Cardiac septum (tissue), 1 donor: ENCODE measurements at regions of chr2 and their contacts with region 1.

Region 1: DNA sequence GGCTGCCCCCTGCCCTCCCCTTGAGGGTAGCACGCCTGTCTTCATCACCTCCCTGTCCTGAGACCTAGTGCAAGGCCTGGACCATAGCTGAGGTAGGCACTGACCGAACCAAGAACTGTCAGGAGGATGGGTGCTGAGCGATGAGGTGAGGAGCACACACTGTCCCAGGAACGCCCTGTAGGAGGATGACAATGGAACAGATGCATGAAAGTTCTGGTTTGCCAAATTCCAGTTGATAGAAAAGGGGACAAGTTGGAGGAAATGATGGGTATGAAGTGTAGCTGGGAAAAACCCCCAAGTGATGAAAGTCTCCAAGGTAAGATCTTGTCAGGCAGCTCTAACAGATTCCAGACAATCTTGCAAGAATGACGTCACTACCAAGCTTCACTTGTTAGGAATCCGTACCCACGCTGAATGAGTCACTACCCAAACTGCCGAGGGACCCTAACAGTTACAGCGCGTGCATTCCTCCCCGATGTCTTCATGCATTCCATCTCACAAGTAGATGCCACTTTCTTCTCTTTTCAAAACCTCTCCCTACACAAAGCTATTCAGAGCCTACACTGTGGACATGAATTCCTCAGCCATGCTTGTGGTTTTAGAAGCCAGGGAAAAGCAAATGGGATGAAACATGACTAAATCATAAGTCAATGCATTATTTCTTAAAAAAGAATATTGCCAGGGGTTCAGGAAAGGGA is 27.6 kb downstream of the MRPL33 start:
- DNase-seq: no peak

Region 2: GRCh38 chr2:27715318-27716210 is 83.5 kb before region 1 on chr2:
- intact Hi-C with region 1: loop called (anchors 5 kb)
- DNase-seq: peak; percentile 89

Region 3: DNA sequence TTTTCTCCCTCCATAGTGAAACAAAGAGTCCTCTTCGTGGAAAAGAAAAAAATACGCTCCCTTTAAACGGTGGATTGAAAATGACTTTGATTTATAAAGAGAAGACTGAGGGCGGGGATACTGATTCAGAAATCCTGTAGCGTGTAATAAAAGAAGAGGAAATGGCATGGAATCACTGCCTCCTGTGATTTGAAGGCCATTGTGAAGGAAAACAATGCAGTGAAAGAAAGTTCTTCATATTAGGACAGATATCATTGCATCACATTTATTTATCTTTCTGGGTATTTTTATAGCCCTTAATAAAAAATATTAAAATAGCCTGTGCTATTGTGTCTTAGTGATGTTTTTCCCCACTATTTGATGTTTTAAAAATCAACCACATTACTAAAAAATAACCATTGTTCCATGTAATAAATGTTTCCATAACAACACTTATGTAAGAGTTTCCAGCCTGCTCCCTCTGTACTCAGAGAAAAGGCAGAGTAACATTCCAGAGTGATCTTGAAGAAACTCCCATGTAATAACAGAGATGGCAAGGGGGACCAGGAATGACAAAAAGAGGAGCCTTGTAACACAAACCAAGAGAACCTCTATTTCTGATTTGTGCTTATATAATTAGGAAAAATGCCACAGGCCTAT is 19.6 kb before region 1 on chr2:
- intact Hi-C with region 1: loop called (anchors 1 kb)
- DNase-seq: no peak

Region 4: DNA sequence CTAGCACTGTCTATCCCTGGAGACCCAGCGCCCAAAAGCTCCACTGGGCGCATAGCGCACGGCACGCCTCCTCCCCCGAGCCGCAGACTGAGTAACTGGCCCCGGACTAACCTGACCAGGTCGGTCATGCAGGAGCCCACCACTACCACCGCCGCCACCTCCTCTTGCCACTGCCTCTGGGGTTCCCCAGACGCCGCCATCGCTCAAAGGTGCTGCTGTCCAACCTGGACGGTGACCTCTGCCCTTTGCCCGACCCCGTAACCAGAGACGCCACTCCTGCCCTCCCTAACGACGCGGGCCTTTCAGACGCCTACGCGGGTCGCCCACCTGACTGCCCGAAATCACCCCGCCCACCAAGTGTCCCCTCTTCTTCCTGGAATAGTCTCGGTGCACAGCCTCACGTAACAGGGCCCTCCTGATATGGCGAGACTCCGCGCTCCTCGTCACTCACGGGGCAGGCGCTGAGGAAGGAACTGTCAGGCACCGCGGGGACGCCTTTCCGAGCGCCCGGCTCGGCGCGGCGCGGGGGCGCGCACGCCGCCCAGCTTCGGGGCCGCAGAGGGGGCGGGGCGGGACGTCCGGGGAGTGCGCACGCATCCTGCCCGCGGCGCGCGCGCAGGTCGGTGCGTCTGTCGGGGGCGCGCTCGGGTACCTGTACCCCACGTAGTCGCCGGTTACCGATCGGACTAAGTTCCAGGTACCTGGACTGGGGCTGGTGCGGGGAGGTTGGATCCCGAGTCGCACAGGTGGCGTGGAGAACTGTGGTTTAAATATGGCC is 91.2 kb after region 1 on chr2 and contains the starts of genes BABAM2 and RBKS:
- intact Hi-C with region 1: loop called (anchors 5 kb)
- DNase-seq: peak; percentile 95
- total RNA-seq, gene BABAM2: 63.4 TPM
- total RNA-seq, gene RBKS: 3.9 TPM

Region 5: GRCh38 chr2:28117104-28117596 is 318.1 kb after region 1 on chr2:
- intact Hi-C with region 1: no loop called
- DNase-seq: no peak